Activated CD4-positive, alpha-beta T cell treated with anti-CD3 and anti-CD28 coated beads for 36 hours (primary cell): ENCODE measurements at regions of chr7 and their contacts with region 1.

Region 1: GRCh38 chr7:76291343-76292212 is 10.9 kb upstream of the HSPB1 start:
- DNase-seq: peak; percentile 94
- ATAC-seq: peak; percentile 96
- H3K4me3 Mint-ChIP-seq: peak overlapping the region; percentile 20
- H3K27ac Mint-ChIP-seq: peak overlapping the region; percentile 94
- H3K4me1 Mint-ChIP-seq: peaks cover 12% of the 10 kb centered on the region
- H3K27me3 Mint-ChIP-seq: peaks cover 2% of the 10 kb centered on the region

Region 2: GRCh38 chr7:75624134-75624832 is 667.3 kb before region 1 on chr7:
- CTCF ChIA-PET with region 1: no interaction called
- POLR2A ChIA-PET with region 1: no interaction called
- intact Hi-C with region 1: no loop called
- DNase-seq: no peak
- ATAC-seq: no peak
- H3K4me3 Mint-ChIP-seq: no peak overlapping the region
- H3K27ac Mint-ChIP-seq: peak overlapping the region; percentile 44
- H3K4me1 Mint-ChIP-seq: no peaks in the 10 kb centered on the region
- H3K27me3 Mint-ChIP-seq: no peaks in the 10 kb centered on the region

Region 3: GRCh38 chr7:75977743-75978142 is 313.8 kb before region 1 on chr7:
- CTCF ChIA-PET with region 1: no interaction called
- POLR2A ChIA-PET with region 1: no interaction called
- intact Hi-C with region 1: no loop called
- DNase-seq: no peak
- ATAC-seq: no peak
- H3K4me3 Mint-ChIP-seq: no peak overlapping the region
- H3K27ac Mint-ChIP-seq: no peak overlapping the region
- H3K4me1 Mint-ChIP-seq: no peaks in the 10 kb centered on the region
- H3K27me3 Mint-ChIP-seq: no peaks in the 10 kb centered on the region

Region 4: GRCh38 chr7:76179686-76180085 is 111.9 kb before region 1 on chr7:
- CTCF ChIA-PET with region 1: interaction called, 5 read pairs
- POLR2A ChIA-PET with region 1: no interaction called
- intact Hi-C with region 1: loop called in 1 of 2 experiments (anchors 1 kb)
- DNase-seq: no peak
- ATAC-seq: no peak
- H3K4me3 Mint-ChIP-seq: no peak overlapping the region
- H3K27ac Mint-ChIP-seq: no peak overlapping the region
- H3K4me1 Mint-ChIP-seq: no peaks in the 10 kb centered on the region
- H3K27me3 Mint-ChIP-seq: no peaks in the 10 kb centered on the region

Region 5: DNA sequence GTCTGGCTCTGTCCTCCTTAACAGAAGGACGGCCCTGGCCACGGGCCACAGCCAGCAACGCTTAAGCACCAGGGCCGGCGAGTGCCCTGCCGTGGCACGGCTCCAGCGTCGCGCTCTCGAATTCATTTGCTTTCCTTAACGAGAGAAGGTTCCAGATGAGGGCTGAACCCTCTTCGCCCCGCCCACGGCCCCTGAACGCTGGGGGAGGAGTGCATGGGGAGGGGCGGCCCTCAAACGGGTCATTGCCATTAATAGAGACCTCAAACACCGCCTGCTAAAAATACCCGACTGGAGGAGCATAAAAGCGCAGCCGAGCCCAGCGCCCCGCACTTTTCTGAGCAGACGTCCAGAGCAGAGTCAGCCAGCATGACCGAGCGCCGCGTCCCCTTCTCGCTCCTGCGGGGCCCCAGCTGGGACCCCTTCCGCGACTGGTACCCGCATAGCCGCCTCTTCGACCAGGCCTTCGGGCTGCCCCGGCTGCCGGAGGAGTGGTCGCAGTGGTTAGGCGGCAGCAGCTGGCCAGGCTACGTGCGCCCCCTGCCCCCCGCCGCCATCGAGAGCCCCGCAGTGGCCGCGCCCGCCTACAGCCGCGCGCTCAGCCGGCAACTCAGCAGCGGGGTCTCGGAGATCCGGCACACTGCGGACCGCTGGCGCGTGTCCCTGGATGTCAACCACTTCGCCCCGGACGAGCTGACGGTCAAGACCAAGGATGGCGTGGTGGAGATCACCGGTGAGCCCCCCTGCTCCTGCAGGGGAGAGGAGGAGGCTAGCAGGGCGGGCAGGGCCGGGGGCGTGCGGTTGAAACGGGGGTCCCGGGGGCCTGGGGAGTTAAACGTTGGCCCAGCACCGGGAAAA is 11.0 kb after region 1 on chr7 and contains the start of gene HSPB1:
- CTCF ChIA-PET with region 1: interaction called, 16 read pairs
- POLR2A ChIA-PET with region 1: interaction called, 3 read pairs
- intact Hi-C with region 1: loop called in 1 of 2 experiments (anchors 1 kb)
- DNase-seq: peak; percentile 77
- ATAC-seq: peak; percentile 40
- H3K4me3 Mint-ChIP-seq: peak within 1 kb of the TSS; percentile 81
- H3K27ac Mint-ChIP-seq: peak within 1 kb of the TSS; percentile 93
- H3K4me1 Mint-ChIP-seq: peaks cover 14% of the 10 kb centered on the region
- H3K27me3 Mint-ChIP-seq: no peaks in the 10 kb centered on the region
- total RNA-seq, gene HSPB1: 71.1 to 127 TPM